ENCODE measurements at regions of chr3 and their contacts with region 1.

Region 1: DNA sequence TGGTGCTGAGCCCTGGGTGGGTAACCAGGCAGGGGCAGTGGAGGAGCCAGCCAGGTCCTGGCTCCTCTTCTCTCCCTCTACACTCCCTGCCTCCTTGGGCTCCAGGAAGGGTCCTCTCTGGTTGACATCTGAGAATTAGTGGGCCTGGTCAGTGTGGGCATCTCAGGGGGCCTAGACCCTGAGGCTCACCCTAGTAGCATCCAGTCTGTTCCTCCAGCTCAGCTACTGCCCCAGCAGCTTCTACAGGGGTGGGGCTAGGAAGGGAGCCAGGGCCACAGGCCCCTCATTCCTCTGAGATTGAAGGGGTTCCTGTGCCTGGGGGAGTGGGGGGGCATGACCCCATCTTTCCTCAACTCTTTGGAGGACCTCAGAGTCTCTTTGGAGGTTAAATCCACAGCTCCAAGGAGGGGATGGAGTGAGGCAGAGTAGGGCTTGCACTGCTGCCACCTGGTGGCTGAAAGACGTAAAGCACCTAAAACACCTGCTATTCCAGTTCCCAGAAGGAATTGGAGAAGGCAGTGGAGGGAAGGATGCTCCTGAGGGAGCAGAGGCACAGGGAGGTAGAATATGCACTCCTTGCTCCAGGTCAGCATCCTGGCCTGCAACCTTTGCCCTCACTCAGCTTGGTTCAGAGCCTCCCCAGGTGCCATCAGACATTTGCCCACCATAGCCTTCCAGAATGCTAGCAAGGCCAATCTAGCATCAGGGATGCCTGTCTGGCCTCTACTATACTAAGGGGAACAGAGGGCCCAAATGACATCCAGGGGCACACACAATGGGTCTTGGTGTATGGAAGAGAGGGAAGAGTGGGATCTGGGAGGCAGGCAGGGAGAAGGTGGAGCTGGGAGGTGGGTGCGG is 25.1 kb downstream of the C3orf18 start:
- DNase-seq: peak in 5 of 6 donors; percentile 36 to 84 (median 72)
- ATAC-seq: peak; percentile 81 to 95 (median 91)
- H3K4me3 ChIP-seq: no peak overlapping the region
- H3K27ac ChIP-seq: no peak overlapping the region
- H3K4me1 ChIP-seq: no peaks in the 10 kb centered on the region
- H3K27me3 ChIP-seq: no peaks in the 10 kb centered on the region
- CTCF ChIP-seq: peak; percentile 63 to 89 (median 88)

Region 2: GRCh38 chr3:49939858-49940666 is 602.3 kb before region 1 on chr3 and contains the start of gene RBM6:
- intact Hi-C with region 1: no loop called
- DNase-seq: peak; percentile 95 to 99 (median 96)
- ATAC-seq: peak; percentile 97 to 99 (median 98)
- H3K4me3 ChIP-seq: peak within 1 kb of the TSS; percentile 65 to 96 (median 82)
- H3K27ac ChIP-seq: peak within 1 kb of the TSS; percentile 83 to 92 (median 88)
- H3K4me1 ChIP-seq: peaks cover 0 to 8% (median 5%) of the 10 kb centered on the region in 3 donors
- H3K27me3 ChIP-seq: no peaks in the 10 kb centered on the region
- CTCF ChIP-seq: no peak
- total RNA-seq, gene RBM6: 24.9 to 64.1 (median 41.7) TPM

Region 3: GRCh38 chr3:50347194-50347918 is 195.1 kb before region 1 on chr3:
- intact Hi-C with region 1: loop called in 1 of 3 experiments (anchors 5 kb)
- DNase-seq: peak in 4 of 6 donors; percentile 70 to 84 (median 80)
- ATAC-seq: peak in 3 of 4 donors; percentile 7 to 15 (median 12)
- H3K4me3 ChIP-seq: no peak overlapping the region
- H3K27ac ChIP-seq: no peak overlapping the region
- H3K4me1 ChIP-seq: peaks cover 0 to 23% (median 7%) of the 10 kb centered on the region in 3 donors
- H3K27me3 ChIP-seq: no peaks in the 10 kb centered on the region
- CTCF ChIP-seq: peak; percentile 25 to 49 (median 36)

Region 4: DNA sequence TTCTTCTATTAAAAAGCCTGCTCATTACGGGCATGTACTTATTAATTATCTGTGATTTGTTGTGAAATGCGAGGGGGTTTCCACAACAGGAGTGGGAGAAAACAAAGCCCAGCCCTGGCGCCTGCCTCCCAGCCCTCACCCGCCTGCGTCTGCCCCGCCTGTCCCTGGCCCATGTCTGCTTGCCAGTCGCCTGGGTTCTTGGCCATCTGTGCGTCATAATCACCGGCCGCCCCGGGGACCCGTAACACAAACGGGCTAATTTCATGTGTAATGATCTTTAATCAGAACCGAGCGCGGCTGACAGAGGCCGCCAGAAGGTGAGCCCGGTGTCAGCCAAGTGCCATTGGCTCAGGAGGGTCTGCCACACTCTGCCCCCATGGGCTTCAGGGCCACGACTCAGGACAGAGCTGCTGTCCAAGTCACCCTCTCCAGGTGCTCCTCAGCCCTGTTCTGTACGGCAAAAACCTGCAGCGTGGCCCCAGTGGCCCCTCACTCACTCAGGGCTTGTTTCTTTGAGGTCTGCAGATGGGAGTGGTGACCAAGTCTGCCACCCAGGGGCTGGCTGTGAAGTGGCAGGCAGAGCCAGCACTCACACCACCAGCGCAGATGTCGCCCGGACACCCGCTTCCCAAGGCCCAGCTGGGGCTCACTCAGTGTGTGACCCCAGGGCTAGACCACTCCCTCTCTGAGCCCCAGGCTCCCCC is 154.2 kb before region 1 on chr3:
- intact Hi-C with region 1: no loop called
- DNase-seq: peak in 4 of 6 donors; percentile 37 to 72 (median 64)
- ATAC-seq: peak; percentile 66 to 77 (median 72)
- H3K4me3 ChIP-seq: no peak overlapping the region
- H3K27ac ChIP-seq: peak overlapping the region in 1 of 4 donors; percentile 42
- H3K4me1 ChIP-seq: peaks cover 14 to 30% (median 27%) of the 10 kb centered on the region in 3 donors
- H3K27me3 ChIP-seq: no peaks in the 10 kb centered on the region
- CTCF ChIP-seq: peak; percentile 10 to 43 (median 19)

Region 5: GRCh38 chr3:50436114-50436674 is 106.2 kb before region 1 on chr3:
- intact Hi-C with region 1: loop called (anchors 5 to 10 kb)
- DNase-seq: peak; percentile 69 to 94 (median 84)
- ATAC-seq: peak; percentile 94 to 99 (median 96)
- H3K4me3 ChIP-seq: no peak overlapping the region
- H3K27ac ChIP-seq: no peak overlapping the region
- H3K4me1 ChIP-seq: no peaks in the 10 kb centered on the region
- H3K27me3 ChIP-seq: no peaks in the 10 kb centered on the region
- CTCF ChIP-seq: peak; percentile 88 to 97 (median 89)

Region 6: DNA sequence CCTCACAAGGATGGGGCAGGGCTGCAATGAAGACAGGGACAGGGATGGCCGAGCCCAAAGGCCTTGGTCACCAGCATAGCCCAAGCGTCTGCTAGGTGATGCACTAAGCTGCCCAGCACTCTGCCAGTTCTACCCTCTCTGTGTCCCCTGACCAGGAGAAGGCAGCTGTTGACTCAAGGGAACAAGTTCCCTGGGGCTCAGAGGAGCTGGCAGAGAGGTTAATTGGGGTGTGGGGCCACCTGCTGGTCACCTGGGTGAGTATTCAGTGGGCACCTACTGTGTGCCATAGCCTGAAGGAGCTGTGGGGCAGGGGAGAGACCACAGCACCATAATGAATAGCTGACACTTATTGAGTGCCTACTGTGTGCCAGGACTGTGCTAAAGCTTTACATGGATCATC is 110.3 kb after region 1 on chr3:
- intact Hi-C with region 1: no loop called
- DNase-seq: peak in 1 of 6 donors; percentile 24
- ATAC-seq: peak in 3 of 4 donors; percentile 56 to 74 (median 61)
- H3K4me3 ChIP-seq: no peak overlapping the region
- H3K27ac ChIP-seq: no peak overlapping the region
- H3K4me1 ChIP-seq: no peaks in the 10 kb centered on the region
- H3K27me3 ChIP-seq: no peaks in the 10 kb centered on the region
- CTCF ChIP-seq: peak in 1 of 4 donors; percentile 19

Measured in pancreas (tissue), 10 donors.